K562 (cell line): ENCODE measurements at regions of chr4 and their contacts with region 1.

Region 1: GRCh38 chr4:83034630-83035494 is at the start of gene COPS4:
- DNase-seq: peak; percentile 95 to 99 (median 96)
- ATAC-seq: peak; percentile 97
- H3K4me3 ChIP-seq: peak within 1 kb of the TSS; percentile 56
- H3K27ac ChIP-seq: peak within 1 kb of the TSS; percentile 86
- H3K4me1 ChIP-seq: peaks cover 6 to 12% of the 10 kb centered on the region in 2 experiments; a peak in 4 of 5 replicates
- H3K27me3 ChIP-seq: no peaks in the 10 kb centered on the region
- CTCF ChIP-seq: no peak
- EP300 ChIP-seq: peak; percentile 55; the same call in 1 of the 2 replicates
- POLR2A ChIP-seq: peak; percentile 95
- RAD21 ChIP-seq: peak in 1 of 2 experiments; percentile 21; a peak in 1 of 4 replicates
- polyA plus RNA-seq, gene COPS4: 171 to 180 TPM

Region 2: DNA sequence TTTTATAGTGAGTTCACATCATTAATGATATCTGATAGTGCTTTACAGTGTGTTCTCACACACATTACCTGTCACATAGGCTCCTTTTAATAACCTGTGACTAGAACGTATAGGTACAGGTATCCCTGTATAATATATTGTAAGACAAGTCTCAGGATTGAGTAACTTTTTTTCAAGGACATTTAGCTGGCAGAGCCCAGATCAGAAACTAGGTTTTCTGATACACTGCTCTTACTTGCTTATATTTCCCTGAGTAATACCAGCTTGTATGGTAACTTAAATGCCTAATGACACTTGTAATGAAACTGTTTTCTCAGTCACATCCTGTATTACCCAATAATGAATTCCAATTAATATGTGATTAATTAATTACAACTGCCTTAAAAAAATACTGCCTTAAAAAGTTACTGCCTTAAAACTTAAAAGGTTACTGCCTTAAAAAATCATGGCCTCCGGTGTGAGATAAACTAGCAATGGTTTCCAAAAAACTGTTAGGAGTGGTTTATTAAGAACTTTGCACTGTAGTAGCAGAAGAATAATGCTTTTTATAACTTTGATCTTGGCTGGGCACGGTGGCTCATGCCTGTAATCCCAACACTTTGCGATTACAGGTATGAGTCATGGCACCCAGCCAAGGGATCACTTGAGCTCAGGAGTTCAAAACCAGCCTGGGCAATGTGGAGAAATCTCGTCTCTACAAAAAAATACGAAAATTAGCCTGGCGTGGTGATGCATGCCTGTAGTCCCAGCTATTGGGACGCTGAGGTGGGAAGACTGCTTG is 12.0 kb after region 1 on chr4:
- CTCF ChIA-PET with region 1: no interaction called
- POLR2A ChIA-PET with region 1: interaction called, 10 read pairs
- in situ Hi-C with region 1: no loop called
- intact Hi-C with region 1: no loop called
- DNase-seq: no peak
- ATAC-seq: no peak
- H3K4me3 ChIP-seq: no peak overlapping the region
- H3K27ac ChIP-seq: no peak overlapping the region
- H3K4me1 ChIP-seq: no peaks in the 10 kb centered on the region
- H3K27me3 ChIP-seq: no peaks in the 10 kb centered on the region
- CTCF ChIP-seq: no peak
- EP300 ChIP-seq: no peak
- POLR2A ChIP-seq: no peak
- RAD21 ChIP-seq: no peak